GM12878 (cell line): ENCODE measurements at regions of chr7 and their contacts with region 1.

Region 1: GRCh38 chr7:157238087-157238486 is 98.7 kb upstream of the DNAJB6 start:
- DNase-seq: no peak
- ATAC-seq: peak; percentile 58; the same call in 1 of the 3 replicates
- H3K4me3 ChIP-seq: no peak overlapping the region
- H3K27ac ChIP-seq: no peak overlapping the region
- H3K4me1 ChIP-seq: no peaks in the 10 kb centered on the region
- H3K27me3 ChIP-seq: no peaks in the 10 kb centered on the region
- CTCF ChIP-seq: peak; percentile 20 to 49 (median 46); a peak in 4 of 6 replicates
- EP300 ChIP-seq: no peak
- POLR2A ChIP-seq: no peak
- RAD21 ChIP-seq: 0 out of 2 replicates have a peak, but pooled peaks have one; percentile 35

Region 2: GRCh38 chr7:157250605-157251228 is 12.6 kb after region 1 on chr7:
- CTCF ChIA-PET with region 1: interaction called, 22 read pairs
- POLR2A ChIA-PET with region 1: no interaction called
- RAD21 ChIA-PET with region 1: interaction called, 3 read pairs
- SMC1A ChIA-PET with region 1: interaction called, 6 read pairs
- in situ Hi-C with region 1: no loop called
- intact Hi-C with region 1: no loop called
- DNase-seq: no peak
- ATAC-seq: peak; percentile 94
- H3K4me3 ChIP-seq: no peak overlapping the region
- H3K27ac ChIP-seq: no peak overlapping the region
- H3K4me1 ChIP-seq: no peaks in the 10 kb centered on the region
- H3K27me3 ChIP-seq: no peaks in the 10 kb centered on the region
- CTCF ChIP-seq: peak; percentile 69 to 84 (median 80)
- EP300 ChIP-seq: no peak
- POLR2A ChIP-seq: no peak
- RAD21 ChIP-seq: peak; percentile 46

Region 3: DNA sequence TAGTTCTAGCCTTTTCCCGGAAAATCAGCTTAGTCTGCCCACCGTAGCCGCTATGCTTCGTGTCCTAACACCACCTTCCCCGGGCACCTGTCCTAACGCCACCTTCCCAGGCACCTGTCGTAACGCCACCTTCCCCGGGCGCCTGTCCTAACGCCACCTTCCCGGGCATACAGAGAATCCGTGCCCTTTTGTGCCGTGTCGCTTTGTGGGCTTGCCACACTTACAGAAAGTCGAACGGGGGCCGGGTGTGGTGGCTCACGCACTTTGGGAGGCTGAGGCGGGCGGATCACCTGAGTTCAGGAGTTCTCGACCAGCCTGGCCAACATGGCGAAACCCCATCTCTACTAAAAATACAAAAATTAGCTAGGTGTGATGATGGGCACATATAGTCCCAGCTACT is 25.1 kb after region 1 on chr7:
- CTCF ChIA-PET with region 1: no interaction called
- POLR2A ChIA-PET with region 1: no interaction called
- RAD21 ChIA-PET with region 1: no interaction called
- SMC1A ChIA-PET with region 1: no interaction called
- in situ Hi-C with region 1: no loop called
- intact Hi-C with region 1: no loop called
- DNase-seq: no peak
- ATAC-seq: no peak
- H3K4me3 ChIP-seq: no peak overlapping the region
- H3K27ac ChIP-seq: no peak overlapping the region
- H3K4me1 ChIP-seq: no peaks in the 10 kb centered on the region
- H3K27me3 ChIP-seq: no peaks in the 10 kb centered on the region
- CTCF ChIP-seq: no peak
- EP300 ChIP-seq: no peak
- POLR2A ChIP-seq: no peak
- RAD21 ChIP-seq: no peak